ENCODE measurements at regions of chr6 and their contacts with region 1.

Region 1: GRCh38 chr6:130202782-130203181 is 20.0 kb downstream of the SAMD3 start:
- DNase-seq: no peak
- H3K4me3 ChIP-seq: no peak overlapping the region
- H3K27ac ChIP-seq: no peak overlapping the region
- H3K4me1 ChIP-seq: no peaks in the 10 kb centered on the region
- H3K27me3 ChIP-seq: no peaks in the 10 kb centered on the region
- CTCF ChIP-seq: no peak
- POLR2A ChIP-seq: no peak

Region 2: GRCh38 chr6:130070792-130071191 is 132.0 kb before region 1 on chr6:
- intact Hi-C with region 1: no loop called
- DNase-seq: no peak
- H3K4me3 ChIP-seq: no peak overlapping the region
- H3K27ac ChIP-seq: no peak overlapping the region
- H3K4me1 ChIP-seq: no peaks in the 10 kb centered on the region
- H3K27me3 ChIP-seq: no peaks in the 10 kb centered on the region
- CTCF ChIP-seq: no peak
- POLR2A ChIP-seq: no peak

Region 3: GRCh38 chr6:130156908-130157307 is 45.9 kb before region 1 on chr6:
- intact Hi-C with region 1: loop called (anchors 2 kb)
- DNase-seq: no peak
- H3K4me3 ChIP-seq: no peak overlapping the region
- H3K27ac ChIP-seq: no peak overlapping the region
- H3K4me1 ChIP-seq: no peaks in the 10 kb centered on the region
- H3K27me3 ChIP-seq: no peaks in the 10 kb centered on the region
- CTCF ChIP-seq: no peak
- POLR2A ChIP-seq: no peak

Region 4: GRCh38 chr6:130615816-130616215 is 413.0 kb after region 1 on chr6:
- intact Hi-C with region 1: loop called (anchors 5 kb)
- DNase-seq: no peak
- H3K4me3 ChIP-seq: no peak overlapping the region
- H3K27ac ChIP-seq: no peak overlapping the region
- H3K4me1 ChIP-seq: no peaks in the 10 kb centered on the region
- H3K27me3 ChIP-seq: no peaks in the 10 kb centered on the region
- CTCF ChIP-seq: no peak
- POLR2A ChIP-seq: no peak